ENCODE measurements at regions of chr2 and their contacts with region 1.

Region 1: DNA sequence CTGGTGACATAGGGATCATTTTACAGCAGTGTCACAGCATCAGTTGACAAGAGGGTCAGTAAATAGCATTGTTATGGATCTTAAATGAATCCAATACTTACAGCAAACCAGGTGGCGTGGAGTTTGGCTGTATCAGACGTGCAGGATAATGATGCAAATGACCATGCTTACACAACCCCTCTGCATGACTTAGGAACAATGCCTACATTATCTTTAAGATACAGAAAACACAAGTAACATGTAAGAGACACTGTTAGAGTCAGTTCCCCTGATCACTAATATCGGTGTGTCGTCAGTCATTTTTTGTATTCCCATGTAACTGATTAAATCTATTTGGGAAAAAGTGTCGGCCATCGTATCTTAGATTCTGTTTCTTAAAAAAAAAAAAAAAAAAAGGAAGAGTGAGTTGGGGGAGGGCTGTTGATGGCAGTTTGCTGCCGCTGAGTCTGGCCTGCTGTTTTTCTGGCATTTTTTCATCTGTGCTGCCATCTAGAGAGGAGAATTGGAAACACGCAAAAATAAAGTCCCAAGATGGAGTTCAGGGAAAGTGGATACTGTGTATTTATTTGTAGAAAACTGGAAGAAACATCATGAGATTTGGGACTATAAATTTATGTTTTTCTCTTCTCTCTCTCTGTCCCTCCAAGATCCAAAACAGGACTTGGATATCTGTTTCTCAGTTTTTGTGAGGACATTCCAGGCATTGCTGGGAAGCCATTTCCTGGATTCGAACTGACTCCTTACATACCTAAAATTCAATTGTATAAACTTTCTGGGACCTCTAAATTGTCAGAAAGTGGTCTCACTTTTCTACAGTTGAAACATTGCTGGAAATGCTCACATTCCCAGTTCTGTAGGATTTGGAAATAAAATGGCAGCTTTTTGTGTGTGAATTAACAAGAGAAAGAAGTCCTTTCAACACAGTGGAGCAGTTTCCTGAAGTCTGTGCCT is 60.3 kb upstream of the AGPS start:
- DNase-seq: no peak
- H3K4me3 ChIP-seq: peak overlapping the region; percentile 15 to 33
- H3K27ac ChIP-seq: peak overlapping the region; percentile 39 to 55
- H3K4me1 ChIP-seq: peaks cover 0 to 5% of the 10 kb centered on the region in 2 donors
- H3K27me3 ChIP-seq: no peaks in the 10 kb centered on the region
- CTCF ChIP-seq: peak; percentile 51 to 69 (median 67)

Region 2: GRCh38 chr2:177118636-177119035 is 213.7 kb before region 1 on chr2:
- intact Hi-C with region 1: no loop called
- DNase-seq: no peak
- H3K4me3 ChIP-seq: no peak overlapping the region
- H3K27ac ChIP-seq: no peak overlapping the region
- H3K4me1 ChIP-seq: no peaks in the 10 kb centered on the region
- H3K27me3 ChIP-seq: no peaks in the 10 kb centered on the region
- CTCF ChIP-seq: no peak

Region 3: GRCh38 chr2:177164584-177165052 is 167.7 kb before region 1 on chr2:
- intact Hi-C with region 1: loop called (anchors 1 kb)
- DNase-seq: peak; percentile 56 to 92
- H3K4me3 ChIP-seq: peak overlapping the region; percentile 53 to 60
- H3K27ac ChIP-seq: peak overlapping the region; percentile 80 to 91
- H3K4me1 ChIP-seq: peaks cover 0 to 8% of the 10 kb centered on the region in 2 donors
- H3K27me3 ChIP-seq: no peaks in the 10 kb centered on the region
- CTCF ChIP-seq: peak; percentile 94 to 100 (median 100)

Region 4: GRCh38 chr2:177263451-177264208 is 68.7 kb before region 1 on chr2:
- intact Hi-C with region 1: loop called (anchors 1 kb)
- DNase-seq: peak; percentile 87 to 99
- H3K4me3 ChIP-seq: peak overlapping the region; percentile 76 to 97
- H3K27ac ChIP-seq: peak overlapping the region; percentile 99 to 100
- H3K4me1 ChIP-seq: peaks cover 5 to 30% of the 10 kb centered on the region in 2 donors
- H3K27me3 ChIP-seq: no peaks in the 10 kb centered on the region
- CTCF ChIP-seq: peak; percentile 86 to 94 (median 93)

Region 5: DNA sequence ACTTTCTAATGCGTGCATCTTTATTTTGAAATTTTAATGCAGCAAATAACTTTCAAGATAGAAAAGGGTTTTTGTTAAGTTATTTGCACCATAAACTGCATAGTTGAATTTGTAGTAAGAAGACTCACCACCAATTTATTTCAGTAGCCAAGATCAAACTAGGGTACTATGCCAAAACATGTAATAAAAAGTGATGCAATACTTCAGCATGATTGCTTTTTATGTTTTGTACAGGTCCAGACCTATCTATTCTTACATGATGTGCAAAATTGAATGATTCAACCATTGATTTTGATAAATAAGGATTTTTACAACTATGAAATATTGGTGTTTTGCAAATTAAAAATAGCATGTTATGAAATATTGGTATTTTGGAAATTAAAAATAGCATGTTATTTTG is 87.0 kb after region 1 on chr2:
- intact Hi-C with region 1: loop called (anchors 2 kb)
- DNase-seq: no peak
- H3K4me3 ChIP-seq: no peak overlapping the region
- H3K27ac ChIP-seq: no peak overlapping the region
- H3K4me1 ChIP-seq: peaks cover 0 to 7% of the 10 kb centered on the region in 2 donors
- H3K27me3 ChIP-seq: no peaks in the 10 kb centered on the region
- CTCF ChIP-seq: no peak

Region 6: GRCh38 chr2:177604271-177605065 is 272.2 kb after region 1 on chr2:
- intact Hi-C with region 1: loop called (anchors 5 kb)
- DNase-seq: no peak
- H3K4me3 ChIP-seq: peak overlapping the region in 1 of 2 donors; percentile 23
- H3K27ac ChIP-seq: no peak overlapping the region
- H3K4me1 ChIP-seq: no peaks in the 10 kb centered on the region
- H3K27me3 ChIP-seq: no peaks in the 10 kb centered on the region
- CTCF ChIP-seq: peak in 2 of 3 experiments; percentile 56 to 62

Region 7: GRCh38 chr2:177708660-177709444 is 376.5 kb after region 1 on chr2:
- intact Hi-C with region 1: no loop called
- DNase-seq: no peak
- H3K4me3 ChIP-seq: no peak overlapping the region
- H3K27ac ChIP-seq: no peak overlapping the region
- H3K4me1 ChIP-seq: no peaks in the 10 kb centered on the region
- H3K27me3 ChIP-seq: no peaks in the 10 kb centered on the region
- CTCF ChIP-seq: no peak

Region 8: GRCh38 chr2:177763532-177764265 is 431.4 kb after region 1 on chr2:
- intact Hi-C with region 1: loop called (anchors 1 kb)
- DNase-seq: peak in 1 of 2 donors; percentile 80
- H3K4me3 ChIP-seq: peak overlapping the region in 1 of 2 donors; percentile 12
- H3K27ac ChIP-seq: no peak overlapping the region
- H3K4me1 ChIP-seq: no peaks in the 10 kb centered on the region
- H3K27me3 ChIP-seq: no peaks in the 10 kb centered on the region
- CTCF ChIP-seq: peak; percentile 34 to 77 (median 64)

Region 9: GRCh38 chr2:177921726-177922125 is 589.4 kb after region 1 on chr2:
- intact Hi-C with region 1: no loop called
- DNase-seq: no peak
- H3K4me3 ChIP-seq: no peak overlapping the region
- H3K27ac ChIP-seq: no peak overlapping the region
- H3K4me1 ChIP-seq: no peaks in the 10 kb centered on the region
- H3K27me3 ChIP-seq: no peaks in the 10 kb centered on the region
- CTCF ChIP-seq: no peak